Activated naive CD4-positive, alpha-beta T cell treated with anti-CD3 and anti-CD28 coated beads for 36 hours (primary cell): ENCODE measurements at regions of chr3 and their contacts with region 1.

Region 1: DNA sequence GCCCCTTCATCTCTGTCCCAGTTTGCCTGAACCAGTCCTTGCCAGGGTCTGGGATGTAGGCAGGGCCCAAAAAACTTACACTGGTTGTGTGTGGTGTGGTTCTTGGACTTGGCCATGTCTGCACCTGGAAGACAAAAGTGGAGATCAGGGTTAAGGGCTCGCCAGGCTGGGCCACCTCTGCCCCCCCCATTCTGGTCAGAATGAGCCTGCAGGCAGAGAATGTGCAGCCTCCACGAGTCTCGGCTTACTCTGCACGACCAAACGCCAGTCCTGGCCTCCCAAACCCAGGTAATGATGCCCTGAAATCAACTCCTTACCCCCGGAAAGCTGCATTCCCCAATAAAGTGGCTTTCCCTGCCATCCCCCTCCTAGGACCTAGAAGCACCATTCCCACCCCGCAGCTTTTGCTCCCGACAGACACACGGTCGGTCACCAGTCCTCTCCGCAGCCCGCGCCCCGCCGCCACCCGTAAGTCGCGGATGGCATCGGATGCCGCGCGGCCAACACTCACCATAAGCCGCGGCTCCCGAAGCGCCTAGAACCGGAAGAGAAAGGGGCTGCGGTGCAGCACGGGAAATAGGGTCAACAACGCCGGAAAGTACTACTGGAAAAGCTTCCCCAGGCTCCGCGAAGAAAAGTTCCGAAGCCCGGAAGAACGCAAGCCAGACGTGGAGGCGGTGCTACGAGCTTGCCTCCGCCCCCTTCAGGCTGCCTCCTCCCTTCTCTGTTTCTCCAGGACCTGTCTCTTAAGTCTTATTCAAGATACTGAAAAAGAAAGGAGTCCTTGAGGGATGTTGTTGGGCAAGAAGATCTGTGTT is at the start of gene RPL29:
- DNase-seq: peak; percentile 96
- H3K4me3 Mint-ChIP-seq: peak within 1 kb of the TSS; percentile 98
- H3K27ac Mint-ChIP-seq: peak within 1 kb of the TSS; percentile 100
- H3K4me1 Mint-ChIP-seq: peaks cover 28% of the 10 kb centered on the region
- H3K27me3 Mint-ChIP-seq: no peaks in the 10 kb centered on the region
- total RNA-seq, gene RPL29: 1,927 to 1,957 TPM

Region 2: DNA sequence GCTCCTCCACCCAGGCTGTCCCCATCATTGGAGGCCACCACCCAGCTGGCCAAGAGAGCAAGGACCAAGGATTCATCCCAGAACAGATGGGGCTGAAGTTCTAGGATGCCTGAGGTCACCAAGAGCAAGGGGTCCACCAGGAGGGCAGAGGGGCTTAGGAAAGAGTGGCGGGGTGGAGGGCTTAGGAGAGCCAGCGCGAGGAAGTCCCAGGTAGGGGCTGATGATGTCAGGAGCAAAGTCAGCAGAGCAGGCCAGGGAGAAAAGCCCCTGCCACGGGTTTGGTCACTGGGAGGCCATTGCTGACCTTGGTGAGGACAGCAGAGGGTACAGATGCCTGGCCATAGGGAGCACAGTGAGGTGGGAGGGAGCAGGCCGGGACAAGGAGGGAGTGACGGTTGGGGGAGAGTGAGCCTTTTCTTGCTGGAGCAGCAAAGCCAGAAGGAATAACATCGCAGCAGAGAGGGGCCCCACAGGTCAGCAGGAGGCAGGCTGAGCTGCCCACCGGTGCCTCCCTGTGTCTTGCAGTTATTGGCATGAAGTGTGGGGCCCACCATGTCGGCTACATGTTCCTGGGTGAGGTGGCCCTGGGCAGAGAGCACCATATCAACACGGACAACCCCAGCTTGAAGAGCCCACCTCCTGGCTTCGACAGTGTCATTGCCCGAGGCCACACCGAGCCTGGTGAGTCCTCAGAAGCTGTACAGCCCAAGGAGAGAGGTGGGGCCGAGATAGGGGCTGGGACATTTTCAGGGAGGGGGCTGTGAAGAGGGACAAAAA is 48.2 kb before region 1 on chr3:
- CTCF ChIA-PET with region 1: interaction called, 5 read pairs
- intact Hi-C with region 1: loop called (anchors 1 kb)
- DNase-seq: no peak
- H3K4me3 Mint-ChIP-seq: no peak overlapping the region
- H3K27ac Mint-ChIP-seq: no peak overlapping the region
- H3K4me1 Mint-ChIP-seq: peaks cover 4% of the 10 kb centered on the region
- H3K27me3 Mint-ChIP-seq: no peaks in the 10 kb centered on the region

Region 3: DNA sequence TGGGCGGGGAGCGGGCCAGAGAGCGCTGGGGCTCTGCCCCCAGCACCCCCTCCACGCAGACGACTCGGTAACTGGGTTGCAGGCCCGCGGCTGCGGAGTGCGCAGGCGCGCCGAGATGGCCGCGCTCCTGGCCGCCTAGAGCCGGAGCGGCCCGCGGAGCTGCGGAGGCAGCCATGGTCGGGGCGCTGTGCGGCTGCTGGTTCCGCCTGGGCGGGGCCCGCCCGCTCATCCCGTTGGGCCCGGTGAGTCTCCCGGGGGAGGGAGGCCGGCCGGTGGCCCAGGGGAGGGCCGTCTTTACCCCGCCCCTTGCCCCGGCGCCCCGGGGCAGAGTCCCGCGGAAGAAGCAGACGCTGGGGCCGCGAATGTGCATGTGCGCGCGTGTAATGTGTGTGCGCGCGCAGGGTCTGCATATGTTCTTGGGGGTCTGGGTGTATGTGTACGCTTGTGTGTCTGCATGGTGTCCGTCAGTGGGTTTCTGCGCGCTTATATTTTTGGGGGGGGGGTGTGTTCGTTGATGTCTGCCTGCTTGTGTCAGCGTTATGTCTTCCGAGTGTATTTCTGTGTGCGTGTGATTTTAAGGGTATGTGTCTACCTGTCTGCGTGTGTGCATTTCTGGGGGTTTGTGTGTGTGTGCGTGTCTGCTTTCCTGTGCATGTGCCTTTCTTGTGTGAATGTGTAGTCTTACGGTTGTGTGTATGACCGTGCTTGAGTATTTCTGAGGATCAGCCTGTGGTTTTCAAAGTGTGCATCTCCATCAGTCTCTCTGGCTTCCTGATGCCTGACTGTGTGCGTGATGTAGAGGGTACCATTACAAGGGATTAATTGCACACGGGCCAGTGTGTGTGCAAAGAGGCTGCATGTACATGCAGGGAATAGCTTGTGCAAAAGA is 20.3 kb before region 1 on chr3 and contains the start of gene ABHD14A:
- CTCF ChIA-PET with region 1: interaction called, 6 read pairs
- intact Hi-C with region 1: loop called (anchors 1 kb)
- DNase-seq: peak; percentile 70
- H3K4me3 Mint-ChIP-seq: peak within 1 kb of the TSS; percentile 99
- H3K27ac Mint-ChIP-seq: peak within 1 kb of the TSS; percentile 97
- H3K4me1 Mint-ChIP-seq: peaks cover 37% of the 10 kb centered on the region
- H3K27me3 Mint-ChIP-seq: no peaks in the 10 kb centered on the region
- total RNA-seq, gene ABHD14A: 5.4 to 5.7 TPM

Region 4: DNA sequence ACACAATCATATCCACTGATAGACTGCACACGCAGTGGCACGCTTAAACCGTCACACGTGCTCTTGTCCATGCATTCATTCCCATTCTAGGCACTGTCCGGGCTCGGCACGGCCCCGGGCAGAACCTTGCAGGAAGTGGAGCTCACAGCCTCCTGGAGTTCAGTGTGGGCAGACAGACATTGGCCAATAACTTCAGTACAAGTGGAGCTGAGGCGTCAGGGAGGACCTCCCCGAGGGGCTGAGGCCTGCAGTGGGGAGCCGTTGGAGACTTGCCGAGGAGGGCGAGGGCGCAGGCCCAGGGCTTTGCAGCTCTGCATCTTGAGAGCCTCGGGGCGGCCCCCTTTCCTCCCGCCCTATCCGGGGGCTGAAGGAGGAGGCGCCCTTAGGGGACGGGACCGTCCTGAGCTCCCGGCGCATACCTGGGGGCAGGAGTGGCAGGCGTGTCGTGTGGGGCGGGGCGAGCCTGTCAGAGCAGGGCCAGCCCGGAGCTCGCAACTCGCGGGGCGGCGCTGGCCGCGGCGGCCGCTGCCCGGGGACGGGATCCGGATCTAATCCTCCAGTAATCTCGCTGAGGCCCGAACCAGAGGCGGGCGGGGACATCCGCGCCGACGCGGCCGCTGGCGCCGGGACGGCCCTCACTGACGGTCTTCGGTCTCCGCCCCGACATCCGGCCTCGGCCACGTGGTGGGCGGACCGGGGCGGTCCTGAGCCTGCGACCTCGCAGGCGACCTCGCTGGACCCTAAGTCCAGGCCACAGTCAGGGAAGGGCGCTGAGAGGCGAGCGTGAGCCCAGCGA is 12.6 kb before region 1 on chr3 and contains the start of gene ACY1:
- CTCF ChIA-PET with region 1: interaction called, 11 read pairs
- intact Hi-C with region 1: loop called (anchors 1 kb)
- DNase-seq: peak; percentile 89
- H3K4me3 Mint-ChIP-seq: peak within 1 kb of the TSS; percentile 95
- H3K27ac Mint-ChIP-seq: peak within 1 kb of the TSS; percentile 91
- H3K4me1 Mint-ChIP-seq: peaks cover 29% of the 10 kb centered on the region
- H3K27me3 Mint-ChIP-seq: no peaks in the 10 kb centered on the region
- total RNA-seq, gene ACY1: 62.1 to 68.9 TPM

Region 5: DNA sequence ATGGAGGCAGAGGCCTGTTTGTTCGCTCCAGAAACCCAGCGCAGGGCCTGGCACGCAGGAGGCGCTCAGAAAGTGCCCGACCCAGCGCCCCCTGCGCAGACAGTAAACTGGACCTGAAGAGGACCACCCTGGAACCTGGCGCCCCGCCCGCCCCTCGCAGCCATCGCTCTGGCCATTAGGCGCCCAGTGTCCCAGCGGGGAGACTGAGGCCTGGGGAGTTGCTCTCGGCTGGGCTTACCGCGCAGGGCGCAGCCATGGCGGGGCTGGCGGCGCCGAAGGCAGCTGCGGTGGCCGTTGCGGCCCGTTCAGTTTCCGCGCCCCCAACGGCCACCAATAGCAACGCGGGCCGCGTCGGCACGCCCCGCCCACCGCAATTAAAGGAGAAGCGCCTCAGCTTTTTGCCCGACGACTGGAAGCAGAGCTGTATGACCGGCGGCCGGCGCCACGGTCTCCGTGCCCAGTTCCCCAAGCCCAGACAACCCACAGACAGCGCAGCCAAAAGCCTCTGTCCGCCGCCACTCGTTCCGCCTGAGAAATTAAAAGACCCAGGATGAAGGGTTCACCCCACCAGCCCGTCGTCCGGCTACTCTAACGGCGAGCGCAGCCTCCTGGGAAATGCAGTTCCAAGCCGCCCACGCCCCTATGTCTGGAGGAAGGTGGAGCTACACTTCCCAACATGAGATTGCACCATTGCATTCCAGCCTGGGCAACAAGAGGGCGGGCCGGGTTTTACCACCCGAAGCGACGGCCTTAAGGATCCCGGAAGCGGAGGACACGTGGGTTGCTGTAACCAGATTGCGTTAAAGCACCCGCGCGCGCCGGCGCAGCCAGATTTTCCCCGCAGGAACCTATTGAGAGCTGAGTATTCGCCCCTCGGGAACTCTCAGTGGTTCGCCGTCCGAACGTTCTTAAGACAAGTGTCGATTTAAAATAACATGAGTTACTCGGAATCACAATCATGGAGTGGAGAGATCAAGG is 158.9 kb after region 1 on chr3 and contains the start of gene POC1A:
- CTCF ChIA-PET with region 1: no interaction called
- intact Hi-C with region 1: loop called (anchors 2 kb)
- DNase-seq: peak; percentile 96
- H3K4me3 Mint-ChIP-seq: peak within 1 kb of the TSS; percentile 91
- H3K27ac Mint-ChIP-seq: peak within 1 kb of the TSS; percentile 92
- H3K4me1 Mint-ChIP-seq: peaks cover 18% of the 10 kb centered on the region
- H3K27me3 Mint-ChIP-seq: no peaks in the 10 kb centered on the region
- total RNA-seq, gene POC1A: 32.3 to 32.7 TPM

Region 6: GRCh38 chr3:52238761-52239701 is 243.5 kb after region 1 on chr3 and contains the start of gene TWF2:
- CTCF ChIA-PET with region 1: no interaction called
- intact Hi-C with region 1: loop called (anchors 5 kb)
- DNase-seq: peak; percentile 83
- H3K4me3 Mint-ChIP-seq: peak within 1 kb of the TSS; percentile 92
- H3K27ac Mint-ChIP-seq: peak within 1 kb of the TSS; percentile 98
- H3K4me1 Mint-ChIP-seq: peaks cover 75% of the 10 kb centered on the region
- H3K27me3 Mint-ChIP-seq: no peaks in the 10 kb centered on the region
- total RNA-seq, gene TWF2: 89.1 to 91.3 TPM

Region 7: DNA sequence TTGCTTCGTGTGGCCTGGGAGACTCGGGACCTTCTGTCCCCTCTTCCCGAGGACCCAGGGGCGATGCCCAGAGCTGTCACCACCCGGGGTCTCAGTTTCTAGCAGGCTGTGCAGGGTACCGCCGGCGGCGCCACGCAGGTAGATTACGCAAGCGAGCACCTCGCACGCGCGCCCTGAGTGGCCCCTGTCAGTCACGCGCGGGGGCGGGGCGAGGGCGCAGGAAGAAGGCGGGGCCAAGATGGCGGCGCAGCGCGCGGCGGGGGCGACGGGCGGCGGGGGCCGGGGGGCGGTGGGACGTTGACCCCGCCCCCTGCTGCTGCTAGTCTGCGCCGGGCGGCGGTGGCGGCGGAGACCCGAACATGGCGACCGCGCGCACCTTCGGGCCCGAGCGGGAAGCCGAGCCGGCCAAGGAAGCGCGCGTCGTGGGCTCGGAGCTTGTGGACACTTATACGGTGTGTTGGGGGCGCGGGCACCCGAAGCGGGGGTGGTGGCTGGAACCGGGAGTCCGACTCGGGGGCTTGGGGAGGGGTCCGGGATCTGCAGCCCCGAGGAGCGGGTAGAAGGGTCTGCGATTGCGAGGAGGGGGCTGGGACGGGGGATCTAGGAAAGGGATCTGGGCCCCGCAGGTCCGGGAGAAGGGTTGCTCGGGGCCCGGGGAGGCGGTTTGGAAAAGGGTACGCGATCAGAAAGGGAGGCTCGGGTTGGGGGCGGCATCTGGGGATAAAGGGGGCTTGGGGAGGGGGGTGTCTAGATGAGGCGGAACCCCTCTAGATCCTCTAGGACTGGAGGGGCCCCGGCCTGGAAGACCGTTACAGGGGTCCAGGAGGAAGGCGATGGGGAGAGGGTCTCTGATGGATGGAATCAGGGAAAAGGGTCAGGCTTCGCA is 460.0 kb after region 1 on chr3 and contains the start of gene NISCH:
- CTCF ChIA-PET with region 1: no interaction called
- intact Hi-C with region 1: loop called (anchors 5 kb)
- DNase-seq: peak; percentile 96
- H3K4me3 Mint-ChIP-seq: peak within 1 kb of the TSS; percentile 94
- H3K27ac Mint-ChIP-seq: peak within 1 kb of the TSS; percentile 96
- H3K4me1 Mint-ChIP-seq: peaks cover 35% of the 10 kb centered on the region
- H3K27me3 Mint-ChIP-seq: no peaks in the 10 kb centered on the region
- total RNA-seq, gene NISCH: 50.4 to 52.5 TPM